ENCODE measurements at regions of chr4 and their contacts with region 1.

Region 1: GRCh38 chr4:128393101-128393704 is 105.6 kb upstream of the PGRMC2 start:
- DNase-seq: no peak
- ATAC-seq: peak; percentile 72

Region 2: GRCh38 chr4:128256539-128256938 is 136.7 kb before region 1 on chr4:
- intact Hi-C with region 1: no loop called
- DNase-seq: no peak
- ATAC-seq: no peak

Region 3: GRCh38 chr4:128427832-128428366 is 34.7 kb after region 1 on chr4:
- intact Hi-C with region 1: loop called (anchors 5 kb)
- DNase-seq: no peak
- ATAC-seq: peak; percentile 68

Measured in Right ventricle myocardium inferior (tissue), 1 donor.